ENCODE measurements at regions of chr15 and their contacts with region 1.

Region 1: DNA sequence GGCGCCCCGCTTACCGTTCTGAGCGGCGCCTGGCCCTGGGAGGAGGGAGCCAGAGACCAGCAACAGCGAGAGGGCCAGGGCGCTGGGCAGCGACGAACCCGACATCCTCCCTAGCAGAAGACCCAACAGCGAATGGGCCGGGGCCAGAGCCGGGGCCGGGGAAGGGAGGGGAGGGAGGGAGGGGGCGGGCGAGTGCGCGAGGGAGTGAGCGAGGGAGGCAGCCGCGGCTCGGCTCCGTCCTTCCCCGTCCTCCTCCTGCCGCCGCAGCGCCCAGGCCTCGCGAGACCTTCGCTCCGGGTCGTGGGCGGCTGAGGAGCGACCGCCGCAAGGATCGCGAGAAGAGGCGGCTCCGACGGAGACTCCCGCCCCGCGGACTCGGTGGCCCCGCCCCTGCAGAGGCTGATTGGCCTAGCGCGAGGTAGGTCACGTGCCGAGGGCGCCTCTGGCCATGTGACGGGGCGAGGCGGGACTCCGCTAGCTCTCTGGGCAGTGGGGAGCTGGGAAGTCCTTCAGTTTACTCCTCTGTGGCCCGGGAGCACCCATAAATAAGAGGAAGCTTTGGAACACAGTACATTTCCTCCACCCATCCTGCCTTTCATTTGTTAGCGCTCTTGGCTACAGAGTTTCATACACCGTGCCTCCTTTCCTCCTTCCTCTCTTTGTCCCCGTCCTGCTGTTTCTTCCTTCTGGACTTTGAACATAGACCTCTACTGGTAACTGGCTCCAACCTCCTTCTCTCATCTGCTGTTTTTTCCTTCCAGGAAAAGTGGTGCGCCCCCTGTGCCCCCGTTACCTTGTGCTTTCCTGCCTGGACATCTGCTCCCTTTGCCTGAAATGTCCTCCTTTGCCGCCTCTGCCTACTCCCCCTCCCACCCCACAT is at the start of gene NPTN:
- DNase-seq: peak; percentile 84 to 99
- H3K4me3 ChIP-seq: peak within 1 kb of the TSS; percentile 82
- H3K27ac ChIP-seq: peak within 1 kb of the TSS; percentile 96
- H3K4me1 ChIP-seq: peaks cover 55% of the 10 kb centered on the region
- H3K27me3 ChIP-seq: no peaks in the 10 kb centered on the region
- CTCF ChIP-seq: no peak
- total RNA-seq, gene NPTN: 61.8 and 101 TPM in 2 replicates

Region 2: GRCh38 chr15:73240866-73241499 is 392.4 kb before region 1 on chr15:
- CTCF ChIA-PET with region 1: no interaction called
- POLR2A ChIA-PET with region 1: no interaction called
- intact Hi-C with region 1: loop called (anchors 1 kb)
- DNase-seq: peak; percentile 49 to 53
- H3K4me3 ChIP-seq: no peak overlapping the region
- H3K27ac ChIP-seq: no peak overlapping the region
- H3K4me1 ChIP-seq: no peaks in the 10 kb centered on the region
- H3K27me3 ChIP-seq: no peaks in the 10 kb centered on the region
- CTCF ChIP-seq: peak; percentile 93

Region 3: GRCh38 chr15:73560501-73561117 is 72.7 kb before region 1 on chr15:
- CTCF ChIA-PET with region 1: interaction called, 13 read pairs
- POLR2A ChIA-PET with region 1: no interaction called
- intact Hi-C with region 1: loop called (anchors 1 kb)
- DNase-seq: peak; percentile 8 to 51
- H3K4me3 ChIP-seq: no peak overlapping the region
- H3K27ac ChIP-seq: no peak overlapping the region
- H3K4me1 ChIP-seq: peaks cover 14% of the 10 kb centered on the region
- H3K27me3 ChIP-seq: no peaks in the 10 kb centered on the region
- CTCF ChIP-seq: peak; percentile 67

Region 4: GRCh38 chr15:73683777-73684580 is 50.6 kb after region 1 on chr15 and contains the start of gene CD276:
- CTCF ChIA-PET with region 1: interaction called, 8 read pairs
- POLR2A ChIA-PET with region 1: no interaction called
- intact Hi-C with region 1: loop called (anchors 5 kb)
- DNase-seq: peak; percentile 58 to 84
- H3K4me3 ChIP-seq: peak within 1 kb of the TSS; percentile 93
- H3K27ac ChIP-seq: peak within 1 kb of the TSS; percentile 66
- H3K4me1 ChIP-seq: peaks cover 34% of the 10 kb centered on the region
- H3K27me3 ChIP-seq: no peaks in the 10 kb centered on the region
- CTCF ChIP-seq: no peak
- total RNA-seq, gene CD276: 82.6 and 91.1 TPM in 2 replicates

Region 5: DNA sequence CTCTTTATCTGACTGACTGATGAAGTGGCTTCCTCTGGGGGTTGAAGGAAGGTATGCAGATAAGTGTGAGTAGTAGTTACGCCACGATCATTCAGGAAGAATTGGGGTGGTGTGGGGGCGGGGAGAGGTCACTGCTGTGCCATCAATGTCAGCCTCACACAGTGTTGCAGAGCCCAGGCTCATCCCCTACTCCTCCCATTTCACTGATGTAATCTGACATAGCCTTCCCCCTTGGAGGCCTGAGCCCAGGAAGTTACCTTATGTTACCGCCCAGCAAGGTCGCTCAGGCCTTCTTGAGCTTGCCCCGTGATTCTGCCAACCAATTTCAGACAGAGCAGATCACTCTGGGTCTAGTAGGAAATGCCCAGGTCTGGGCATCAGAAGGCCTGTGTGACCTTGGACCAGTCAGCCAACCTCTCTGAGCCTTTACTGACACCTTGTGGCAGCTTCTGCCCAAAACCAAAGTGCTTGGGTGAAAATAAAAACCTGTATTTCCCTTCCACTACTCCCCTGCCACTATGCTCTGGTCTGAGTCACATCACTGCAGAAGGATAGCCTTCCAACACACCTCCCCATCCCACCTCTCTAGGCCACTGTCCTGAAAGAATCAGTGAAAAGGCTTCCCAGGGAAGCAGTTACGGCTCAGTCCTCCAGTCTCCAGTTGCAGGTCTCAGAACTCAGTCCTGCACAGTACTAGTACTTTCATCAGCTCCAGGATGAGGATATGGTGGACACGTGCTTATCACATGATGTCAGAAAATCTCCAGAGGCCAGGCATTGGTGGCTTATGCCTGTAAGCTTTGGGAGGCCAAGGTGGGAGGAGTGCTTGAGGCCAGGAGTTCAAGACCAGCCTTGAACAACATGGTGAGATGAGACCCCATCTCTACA is 147.9 kb after region 1 on chr15:
- CTCF ChIA-PET with region 1: interaction called, 25 read pairs
- POLR2A ChIA-PET with region 1: no interaction called
- intact Hi-C with region 1: no loop called
- DNase-seq: peak in 1 of 2 experiments; percentile 8
- H3K4me3 ChIP-seq: no peak overlapping the region
- H3K27ac ChIP-seq: no peak overlapping the region
- H3K4me1 ChIP-seq: no peaks in the 10 kb centered on the region
- H3K27me3 ChIP-seq: peaks cover 5% of the 10 kb centered on the region; the same call in 1 of the 2 replicates
- CTCF ChIP-seq: peak; percentile 52; the same call in 1 of the 2 replicates

Region 6: DNA sequence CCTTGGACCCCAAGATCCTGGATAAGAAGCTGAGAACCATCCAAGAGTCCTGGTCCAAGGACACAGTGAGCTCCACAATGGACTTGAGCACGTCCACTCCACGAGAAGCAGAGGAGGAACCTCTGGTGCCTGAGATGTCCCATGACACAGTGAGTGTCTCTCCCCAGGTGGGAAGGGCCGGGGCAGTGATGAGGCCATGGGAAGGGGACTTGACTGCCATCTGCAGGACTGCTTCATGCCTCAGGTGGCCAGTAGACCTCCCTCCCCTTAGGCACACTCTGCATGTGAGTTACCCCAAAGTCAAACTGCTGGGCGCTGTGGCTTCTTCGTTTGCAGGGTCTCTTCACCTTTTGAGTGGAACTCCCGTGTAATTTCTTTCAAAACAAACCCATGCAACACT is 662.4 kb after region 1 on chr15:
- CTCF ChIA-PET with region 1: no interaction called
- POLR2A ChIA-PET with region 1: no interaction called
- intact Hi-C with region 1: no loop called
- DNase-seq: peak in 1 of 2 experiments; percentile 14
- H3K4me3 ChIP-seq: no peak overlapping the region
- H3K27ac ChIP-seq: no peak overlapping the region
- H3K4me1 ChIP-seq: no peaks in the 10 kb centered on the region
- H3K27me3 ChIP-seq: peaks cover 2% of the 10 kb centered on the region; the same call in 1 of the 2 replicates
- CTCF ChIP-seq: 0 out of 2 replicates have a peak, but pooled peaks have one; percentile 24

Measured in PC-9 (cell line).